PC-9 (cell line): ENCODE measurements at regions of chr5 and their contacts with region 1.

Region 1: GRCh38 chr5:148383564-148384379 is at the start of gene FBXO38:
- DNase-seq: peak; percentile 92
- H3K4me3 ChIP-seq: peak within 1 kb of the TSS; percentile 65
- H3K27ac ChIP-seq: peak within 1 kb of the TSS; percentile 66
- H3K4me1 ChIP-seq: peaks cover 38% of the 10 kb centered on the region
- H3K27me3 ChIP-seq: no peaks in the 10 kb centered on the region
- CTCF ChIP-seq: no peak
- total RNA-seq, gene FBXO38: 39.2 and 49.8 TPM in 2 replicates

Region 2: GRCh38 chr5:147949711-147950573 is 433.8 kb before region 1 on chr5:
- CTCF ChIA-PET with region 1: no interaction called
- POLR2A ChIA-PET with region 1: no interaction called
- intact Hi-C with region 1: no loop called
- DNase-seq: peak in 1 of 2 experiments; percentile 42
- H3K4me3 ChIP-seq: no peak overlapping the region
- H3K27ac ChIP-seq: no peak overlapping the region
- H3K4me1 ChIP-seq: no peaks in the 10 kb centered on the region
- H3K27me3 ChIP-seq: no peaks in the 10 kb centered on the region
- CTCF ChIP-seq: peak; percentile 83

Region 3: GRCh38 chr5:148011401-148012132 is 372.2 kb before region 1 on chr5:
- CTCF ChIA-PET with region 1: no interaction called
- POLR2A ChIA-PET with region 1: no interaction called
- intact Hi-C with region 1: loop called (anchors 5 kb)
- DNase-seq: peak; percentile 71 to 94
- H3K4me3 ChIP-seq: no peak overlapping the region
- H3K27ac ChIP-seq: no peak overlapping the region
- H3K4me1 ChIP-seq: peaks cover 27% of the 10 kb centered on the region
- H3K27me3 ChIP-seq: peaks cover 17% of the 10 kb centered on the region; the same call in 1 of the 2 replicates
- CTCF ChIP-seq: no peak

Region 4: GRCh38 chr5:148290271-148291195 is 93.2 kb before region 1 on chr5:
- CTCF ChIA-PET with region 1: interaction called, 10 read pairs
- POLR2A ChIA-PET with region 1: no interaction called
- intact Hi-C with region 1: no loop called
- DNase-seq: no peak
- H3K4me3 ChIP-seq: no peak overlapping the region
- H3K27ac ChIP-seq: no peak overlapping the region
- H3K4me1 ChIP-seq: no peaks in the 10 kb centered on the region
- H3K27me3 ChIP-seq: no peaks in the 10 kb centered on the region
- CTCF ChIP-seq: peak; percentile 68

Region 5: DNA sequence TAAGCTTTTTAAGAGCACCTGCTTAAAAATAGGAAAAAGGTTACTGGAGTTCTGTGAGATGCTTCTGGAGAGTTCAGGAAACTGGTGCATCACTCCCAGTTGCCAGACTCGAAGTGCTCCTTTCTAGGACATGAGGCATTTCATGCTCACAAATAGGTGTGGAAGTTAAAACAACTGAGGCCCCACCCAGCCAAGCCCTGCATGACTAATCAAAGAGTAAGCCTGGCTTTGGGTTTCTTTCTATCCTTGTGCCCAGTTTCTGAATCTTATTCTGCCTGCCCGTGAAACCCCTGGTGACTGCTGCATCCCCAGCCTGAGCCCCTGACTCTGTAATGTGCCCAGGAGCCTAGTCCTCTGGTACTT is 40.7 kb before region 1 on chr5:
- CTCF ChIA-PET with region 1: no interaction called
- POLR2A ChIA-PET with region 1: no interaction called
- intact Hi-C with region 1: loop called (anchors 2 kb)
- DNase-seq: peak; percentile 67 to 84
- H3K4me3 ChIP-seq: peak overlapping the region; percentile 33; the same call in 1 of the 2 replicates
- H3K27ac ChIP-seq: peak overlapping the region; percentile 93
- H3K4me1 ChIP-seq: peaks cover 24% of the 10 kb centered on the region
- H3K27me3 ChIP-seq: no peaks in the 10 kb centered on the region
- CTCF ChIP-seq: no peak

Region 6: DNA sequence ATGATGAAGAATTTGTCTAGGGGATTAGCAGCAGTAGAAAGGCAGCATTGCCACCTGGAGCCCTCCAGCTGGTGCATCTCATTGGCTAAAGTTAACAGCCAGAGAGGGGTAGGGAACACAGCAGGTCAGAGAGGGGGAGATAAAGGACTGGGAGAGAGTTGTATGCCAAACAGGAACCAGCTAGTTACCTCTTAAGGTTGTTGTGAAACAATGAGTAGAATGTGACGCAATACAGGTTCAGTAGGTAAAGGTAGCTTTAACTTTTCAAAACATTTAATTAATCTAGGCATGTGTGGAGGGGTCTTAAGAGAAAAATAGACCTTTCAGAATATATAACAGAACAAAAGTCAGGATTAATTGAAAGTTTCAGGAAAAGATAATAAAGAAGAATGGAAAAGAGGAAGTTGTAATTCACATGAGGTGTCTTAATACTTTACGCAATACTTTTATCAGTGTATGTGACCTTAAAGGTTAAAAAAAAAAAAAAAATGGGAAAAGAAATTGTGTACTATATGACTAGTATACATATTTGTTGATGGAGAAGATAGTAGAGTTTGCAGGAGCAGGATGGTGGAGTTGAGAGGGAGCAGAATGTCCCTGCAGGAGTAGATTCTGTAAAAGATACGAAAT is 14.3 kb after region 1 on chr5:
- CTCF ChIA-PET with region 1: no interaction called
- POLR2A ChIA-PET with region 1: no interaction called
- intact Hi-C with region 1: loop called (anchors 1 kb)
- DNase-seq: peak; percentile 16 to 85
- H3K4me3 ChIP-seq: peak overlapping the region; percentile 30; the same call in 1 of the 2 replicates
- H3K27ac ChIP-seq: peak overlapping the region; percentile 88
- H3K4me1 ChIP-seq: peaks cover 47% of the 10 kb centered on the region
- H3K27me3 ChIP-seq: no peaks in the 10 kb centered on the region
- CTCF ChIP-seq: no peak